Right ventricle myocardium superior (tissue), 1 donor: ENCODE measurements at regions of chr11 and their contacts with region 1.

Region 1: DNA sequence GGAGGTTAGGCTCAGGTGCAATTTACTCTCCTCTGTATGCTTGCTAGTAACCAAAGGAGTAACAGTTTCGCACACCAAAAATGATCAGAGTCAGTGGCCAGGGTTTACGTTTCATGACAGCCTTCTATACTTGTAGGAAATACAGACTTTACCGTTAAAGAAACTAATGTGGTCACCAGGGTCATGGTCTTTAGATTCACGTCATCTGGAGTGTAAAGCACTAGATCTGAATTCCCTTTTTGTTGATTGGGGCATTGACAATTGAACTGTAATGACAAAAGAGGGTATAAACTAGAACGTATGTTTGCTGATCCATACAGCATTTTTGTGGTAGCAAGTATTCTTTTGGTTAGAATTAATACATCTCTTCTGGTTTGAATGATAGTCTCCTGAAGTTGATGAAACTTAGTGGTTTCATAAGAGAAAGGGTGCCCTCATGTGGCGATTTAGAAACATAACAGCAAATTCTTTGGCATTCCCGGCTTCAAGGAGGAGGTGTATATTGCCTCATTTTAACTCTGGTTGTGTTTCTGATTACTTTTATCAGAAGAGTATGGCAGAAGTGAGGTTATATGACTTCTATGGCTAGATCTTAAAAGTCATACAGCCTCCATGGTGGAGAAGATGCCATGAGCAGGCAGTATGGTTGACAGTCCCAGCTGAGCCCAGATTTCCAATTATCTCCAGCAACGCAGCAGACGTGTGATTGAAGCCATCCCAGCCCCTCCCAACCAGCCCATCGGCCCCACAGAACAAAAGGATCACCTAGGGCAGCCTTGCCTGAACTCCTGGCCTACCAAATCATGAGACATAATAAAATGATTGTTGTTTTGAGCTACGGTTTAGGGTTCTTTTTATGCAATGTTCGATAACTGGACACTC is 35.1 kb downstream of the MMP7 start:
- DNase-seq: no peak
- ATAC-seq: peak; percentile 90

Region 2: GRCh38 chr11:102341844-102342318 is 153.5 kb before region 1 on chr11:
- intact Hi-C with region 1: loop called (anchors 5 kb)
- DNase-seq: peak; percentile 45
- ATAC-seq: peak; percentile 70

Region 3: GRCh38 chr11:102390667-102391465 is 104.5 kb before region 1 on chr11:
- intact Hi-C with region 1: loop called (anchors 5 kb)
- DNase-seq: peak; percentile 61
- ATAC-seq: peak; percentile 90

Region 4: DNA sequence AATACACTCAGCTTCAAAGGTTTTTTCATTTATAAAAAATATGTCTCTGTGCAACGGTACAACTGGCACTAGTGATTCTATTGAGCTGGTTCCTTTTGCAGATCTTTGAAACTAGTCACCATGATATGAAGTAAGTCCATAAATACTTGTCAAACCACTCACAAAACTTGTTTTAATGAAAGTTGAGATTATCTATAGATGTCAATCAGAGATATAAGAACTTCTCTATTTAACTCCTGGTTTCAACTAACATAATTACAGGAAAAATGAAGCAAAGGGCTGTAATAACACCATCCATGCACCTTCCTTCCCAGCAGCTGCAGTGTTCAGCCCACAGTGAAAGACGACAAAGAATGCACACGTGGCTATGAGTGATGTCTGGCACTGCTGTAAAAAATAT is 87.5 kb before region 1 on chr11:
- intact Hi-C with region 1: no loop called
- DNase-seq: no peak
- ATAC-seq: no peak

Region 5: GRCh38 chr11:102669664-102670063 is 174.3 kb after region 1 on chr11:
- intact Hi-C with region 1: no loop called
- DNase-seq: no peak
- ATAC-seq: no peak